ENCODE measurements at regions of chr7 and their contacts with region 1.

Region 1: GRCh38 chr7:110442381-110442837 is 648.5 kb upstream of the LRRN3 start:
- DNase-seq: peak; percentile 75
- ATAC-seq: peak; percentile 99
- H3K4me3 Mint-ChIP-seq: no peak overlapping the region
- H3K27ac Mint-ChIP-seq: no peak overlapping the region
- H3K4me1 Mint-ChIP-seq: 0 out of 2 replicates have a peak, but pooled peaks cover 2% of the 10 kb centered on the region
- H3K27me3 Mint-ChIP-seq: no peaks in the 10 kb centered on the region
- CTCF ChIP-seq: peak; percentile 55; the same call in 1 of the 2 replicates

Region 2: GRCh38 chr7:110283082-110283481 is 159.3 kb before region 1 on chr7:
- CTCF ChIA-PET with region 1: interaction called, 10 read pairs
- POLR2A ChIA-PET with region 1: no interaction called
- DNase-seq: no peak
- ATAC-seq: no peak
- H3K4me3 Mint-ChIP-seq: no peak overlapping the region
- H3K27ac Mint-ChIP-seq: no peak overlapping the region
- H3K4me1 Mint-ChIP-seq: peaks cover 16% of the 10 kb centered on the region
- H3K27me3 Mint-ChIP-seq: peaks cover 33% of the 10 kb centered on the region
- CTCF ChIP-seq: no peak